ENCODE measurements at regions of chr7 and their contacts with region 1.

Region 1: DNA sequence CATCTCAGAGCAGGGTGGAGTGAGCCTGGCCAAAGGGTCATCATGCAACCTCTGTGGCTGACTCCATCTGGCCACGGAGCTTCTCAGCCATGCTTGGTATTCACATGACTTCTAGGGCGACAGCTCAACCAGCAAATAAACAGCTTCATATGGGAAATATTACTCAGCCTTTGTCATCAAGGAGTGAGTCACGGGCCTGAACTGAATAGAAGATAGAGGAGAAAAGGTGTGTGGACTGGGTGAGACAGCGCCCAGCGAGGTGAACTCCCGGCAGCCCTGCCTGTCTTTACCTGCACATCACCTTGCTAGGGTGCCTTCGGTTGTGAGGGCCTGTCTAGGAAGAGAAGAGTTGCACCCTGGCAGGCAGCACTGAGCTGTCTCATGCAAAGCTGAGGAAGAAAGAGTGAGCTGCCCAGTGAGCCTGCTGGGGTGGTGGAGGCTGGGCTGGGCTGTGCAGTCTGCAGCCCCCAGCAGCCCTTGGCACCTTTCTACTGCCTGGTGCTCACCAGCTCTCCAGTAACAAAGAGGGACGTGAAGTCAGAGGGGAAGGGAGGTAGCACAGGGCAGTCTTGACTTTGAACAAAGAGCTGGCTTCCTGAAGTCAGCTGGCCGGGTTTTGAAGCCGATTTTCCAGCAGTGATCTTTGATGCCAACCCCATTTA is 114.2 kb downstream of the EGFR start:
- DNase-seq: peak in 1 of 2 donors; percentile 54
- ATAC-seq: peak; percentile 65 to 81 (median 73)
- H3K4me3 ChIP-seq: no peak overlapping the region
- H3K27ac ChIP-seq: peak overlapping the region; percentile 97
- H3K4me1 ChIP-seq: peaks cover 66% of the 10 kb centered on the region
- H3K27me3 ChIP-seq: no peaks in the 10 kb centered on the region
- CTCF ChIP-seq: no peak

Region 2: GRCh38 chr7:55065079-55065478 is 67.9 kb before region 1 on chr7:
- intact Hi-C with region 1: loop called in 1 of 2 experiments (anchors 5 kb)
- DNase-seq: peak; percentile 59 to 80
- ATAC-seq: peak; percentile 55 to 77 (median 70)
- H3K4me3 ChIP-seq: peak overlapping the region; percentile 49
- H3K27ac ChIP-seq: peak overlapping the region; percentile 81
- H3K4me1 ChIP-seq: peaks cover 58% of the 10 kb centered on the region
- H3K27me3 ChIP-seq: no peaks in the 10 kb centered on the region
- CTCF ChIP-seq: no peak

Region 3: DNA sequence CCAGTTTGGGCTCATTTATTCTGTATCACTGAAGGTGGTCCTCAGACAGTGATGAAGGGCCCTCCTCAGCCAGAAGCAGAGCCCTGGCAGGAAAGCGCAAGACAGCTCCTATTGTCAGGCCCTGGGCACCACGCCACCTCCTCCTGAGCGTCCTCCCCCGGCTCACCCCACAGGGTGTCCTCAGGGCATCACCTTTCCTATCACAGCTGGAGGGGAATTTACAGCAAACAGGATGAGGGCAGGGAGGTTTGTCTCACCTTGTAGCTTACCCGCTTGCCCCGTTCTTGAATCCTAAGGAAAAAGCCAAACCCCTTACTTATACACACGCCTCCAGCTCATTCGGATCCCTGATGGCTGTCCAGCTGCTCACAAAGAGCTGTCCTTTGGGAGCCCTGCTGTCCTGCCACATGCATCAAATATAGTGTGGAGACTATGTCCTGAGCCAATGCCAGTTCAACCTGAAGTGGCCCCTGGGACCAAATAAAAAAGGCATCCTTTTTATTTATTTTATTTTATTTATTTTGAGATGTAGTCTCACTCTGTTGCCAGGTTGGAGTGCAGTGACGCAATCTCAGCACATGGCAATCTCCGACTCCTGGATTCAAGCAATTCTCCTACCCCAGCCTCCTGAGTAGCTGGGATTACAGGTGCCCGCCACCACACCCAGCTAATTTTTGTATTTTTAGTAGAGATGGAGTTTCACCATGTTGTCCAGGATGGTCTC is 182.1 kb after region 1 on chr7:
- intact Hi-C with region 1: no loop called
- DNase-seq: no peak
- ATAC-seq: no peak
- H3K4me3 ChIP-seq: no peak overlapping the region
- H3K27ac ChIP-seq: no peak overlapping the region
- H3K4me1 ChIP-seq: no peaks in the 10 kb centered on the region
- H3K27me3 ChIP-seq: no peaks in the 10 kb centered on the region
- CTCF ChIP-seq: no peak

Measured in psoas muscle (tissue), 8 donors.